SK-N-SH (cell line): ENCODE measurements at regions of chr12 and their contacts with region 1.

Region 1: DNA sequence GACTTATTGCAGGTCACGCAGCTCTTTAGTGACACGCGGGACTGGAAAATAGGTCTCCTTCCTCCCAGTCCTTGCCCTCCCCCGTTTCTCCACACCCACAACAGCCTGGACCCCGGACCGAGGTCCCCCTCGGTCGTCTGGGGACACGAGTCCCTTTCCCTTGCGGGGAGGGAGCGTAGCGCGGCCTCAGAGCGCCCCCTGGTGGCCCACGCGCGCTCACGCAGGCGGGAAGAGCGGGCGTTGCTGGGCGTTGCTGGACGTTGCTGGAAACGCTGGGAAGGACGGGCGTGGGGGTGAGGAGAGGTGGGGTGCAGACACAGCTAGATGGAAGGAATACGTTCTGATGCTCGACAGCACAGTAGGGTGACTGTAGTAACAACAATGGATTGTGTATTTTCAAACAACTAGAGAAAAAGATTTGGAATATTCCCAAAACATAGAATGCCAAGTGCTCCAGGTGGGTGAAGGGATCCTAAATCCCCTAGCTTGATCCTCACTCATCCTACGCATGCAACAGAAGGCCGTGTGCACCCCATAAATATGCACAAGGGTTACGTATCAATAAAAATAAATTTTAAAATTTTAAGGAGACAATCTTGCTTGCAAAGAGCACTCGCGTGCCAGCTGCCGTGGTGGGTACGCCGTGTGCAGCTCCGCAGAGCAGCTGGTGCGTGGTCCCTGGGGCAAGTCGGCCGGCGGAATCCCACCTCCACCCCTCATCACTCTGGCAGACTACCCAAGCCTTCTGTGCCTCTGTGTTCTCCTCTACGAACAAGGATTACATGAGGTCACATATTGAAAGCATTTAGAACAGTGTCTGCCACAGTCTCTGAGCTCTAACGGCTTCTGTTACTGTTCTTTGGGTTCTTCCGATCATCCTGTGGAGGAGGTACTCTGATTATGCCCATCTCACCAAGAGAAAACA is 87.4 kb downstream of the B4GALNT3 start:
- DNase-seq: peak; percentile 96
- H3K4me3 ChIP-seq: peak overlapping the region; percentile 28 to 49
- H3K27ac ChIP-seq: no peak overlapping the region
- H3K4me1 ChIP-seq: peaks cover 0 to 13% of the 10 kb centered on the region in 2 experiments; a peak in 1 of 4 replicates
- H3K27me3 ChIP-seq: no peaks in the 10 kb centered on the region; the same call in 1 of the 2 replicates
- CTCF ChIP-seq: peak; percentile 95
- EP300 ChIP-seq: peak in 1 of 2 experiments; percentile 66; a peak in 2 of 4 replicates
- RAD21 ChIP-seq: peak; percentile 97

Region 2: DNA sequence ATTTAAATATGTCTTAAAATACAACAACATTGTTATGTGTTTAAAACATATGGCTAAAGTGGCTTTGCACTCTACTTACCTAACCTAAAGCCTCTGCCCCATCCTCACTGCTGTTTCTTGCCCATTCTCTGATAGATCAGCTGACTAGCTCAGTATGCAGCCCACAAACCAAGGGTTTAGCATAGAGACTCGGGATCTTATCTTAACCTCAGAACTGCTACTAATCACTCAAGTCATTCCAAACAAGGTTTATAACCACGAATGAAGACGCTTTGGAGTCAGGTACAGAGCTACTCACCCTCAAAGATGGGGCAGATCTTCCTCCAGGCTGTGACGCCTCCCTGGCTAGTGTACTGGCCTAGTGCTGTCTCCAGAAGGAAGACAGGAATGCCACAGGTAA is 303.8 kb before region 1 on chr12:
- CTCF ChIA-PET with region 1: no interaction called
- POLR2A ChIA-PET with region 1: no interaction called
- DNase-seq: no peak
- H3K4me3 ChIP-seq: no peak overlapping the region
- H3K27ac ChIP-seq: no peak overlapping the region
- H3K4me1 ChIP-seq: no peaks in the 10 kb centered on the region
- H3K27me3 ChIP-seq: no peaks in the 10 kb centered on the region
- CTCF ChIP-seq: no peak
- EP300 ChIP-seq: no peak
- RAD21 ChIP-seq: no peak

Region 3: GRCh38 chr12:442235-442884 is 104.8 kb before region 1 on chr12:
- CTCF ChIA-PET with region 1: interaction called, 560 read pairs
- POLR2A ChIA-PET with region 1: interaction called, 3 read pairs
- DNase-seq: peak; percentile 70
- H3K4me3 ChIP-seq: no peak overlapping the region; a peak in 1 of 4 replicates
- H3K27ac ChIP-seq: no peak overlapping the region
- H3K4me1 ChIP-seq: no peaks in the 10 kb centered on the region
- H3K27me3 ChIP-seq: no peaks in the 10 kb centered on the region
- CTCF ChIP-seq: peak; percentile 79
- EP300 ChIP-seq: no peak
- RAD21 ChIP-seq: peak; percentile 85

Region 4: GRCh38 chr12:475291-475690 is 71.9 kb before region 1 on chr12:
- CTCF ChIA-PET with region 1: interaction called, 23 read pairs
- POLR2A ChIA-PET with region 1: no interaction called
- DNase-seq: no peak
- H3K4me3 ChIP-seq: no peak overlapping the region
- H3K27ac ChIP-seq: no peak overlapping the region
- H3K4me1 ChIP-seq: no peaks in the 10 kb centered on the region
- H3K27me3 ChIP-seq: peaks cover 13% of the 10 kb centered on the region; the same call in 1 of the 2 replicates
- CTCF ChIP-seq: no peak
- EP300 ChIP-seq: no peak
- RAD21 ChIP-seq: no peak

Region 5: GRCh38 chr12:527241-527640 is 19.9 kb before region 1 on chr12:
- CTCF ChIA-PET with region 1: interaction called, 25 read pairs
- POLR2A ChIA-PET with region 1: interaction called, 3 read pairs
- DNase-seq: no peak
- H3K4me3 ChIP-seq: no peak overlapping the region
- H3K27ac ChIP-seq: no peak overlapping the region
- H3K4me1 ChIP-seq: peaks cover 0 to 3% of the 10 kb centered on the region in 2 experiments; a peak in 2 of 4 replicates
- H3K27me3 ChIP-seq: no peaks in the 10 kb centered on the region
- CTCF ChIP-seq: no peak
- EP300 ChIP-seq: no peak
- RAD21 ChIP-seq: no peak

Region 6: GRCh38 chr12:563250-563781 is 16.1 kb after region 1 on chr12:
- CTCF ChIA-PET with region 1: interaction called, 52 read pairs
- POLR2A ChIA-PET with region 1: no interaction called
- DNase-seq: no peak
- H3K4me3 ChIP-seq: no peak overlapping the region
- H3K27ac ChIP-seq: no peak overlapping the region
- H3K4me1 ChIP-seq: peaks cover 0 to 16% of the 10 kb centered on the region in 2 experiments; a peak in 1 of 4 replicates
- H3K27me3 ChIP-seq: no peaks in the 10 kb centered on the region; the same call in 1 of the 2 replicates
- CTCF ChIP-seq: no peak
- EP300 ChIP-seq: no peak
- RAD21 ChIP-seq: no peak

Region 7: GRCh38 chr12:810671-811415 is 263.7 kb after region 1 on chr12:
- CTCF ChIA-PET with region 1: interaction called, 10 read pairs
- POLR2A ChIA-PET with region 1: no interaction called
- DNase-seq: no peak
- H3K4me3 ChIP-seq: no peak overlapping the region
- H3K27ac ChIP-seq: no peak overlapping the region
- H3K4me1 ChIP-seq: peaks cover 2 to 25% of the 10 kb centered on the region in 2 experiments
- H3K27me3 ChIP-seq: no peaks in the 10 kb centered on the region
- CTCF ChIP-seq: no peak
- EP300 ChIP-seq: no peak
- RAD21 ChIP-seq: no peak